ENCODE measurements at regions of chr9 and their contacts with region 1.

Region 1: GRCh38 chr9:137046098-137046787 is at the start of gene NPDC1:
- DNase-seq: peak; percentile 68 to 83 (median 71)
- H3K4me3 ChIP-seq: peak within 1 kb of the TSS; percentile 47
- H3K4me3 Mint-ChIP-seq: peak within 1 kb of the TSS; percentile 70 to 87 (median 86)
- H3K27ac ChIP-seq: peak within 1 kb of the TSS; percentile 24
- H3K27ac Mint-ChIP-seq: peak within 1 kb of the TSS in 4 of 8 donors; percentile 38 to 60 (median 44)
- H3K4me1 ChIP-seq: peaks cover 27% of the 10 kb centered on the region
- H3K4me1 Mint-ChIP-seq: peaks cover 6 to 26% (median 13%) of the 10 kb centered on the region in 3 donors
- H3K27me3 ChIP-seq: peaks cover 49% of the 10 kb centered on the region
- H3K27me3 Mint-ChIP-seq: peaks cover 28 to 35% of the 10 kb centered on the region in 2 donors
- total RNA-seq, gene NPDC1: 24.6 to 27.5 TPM

Region 2: DNA sequence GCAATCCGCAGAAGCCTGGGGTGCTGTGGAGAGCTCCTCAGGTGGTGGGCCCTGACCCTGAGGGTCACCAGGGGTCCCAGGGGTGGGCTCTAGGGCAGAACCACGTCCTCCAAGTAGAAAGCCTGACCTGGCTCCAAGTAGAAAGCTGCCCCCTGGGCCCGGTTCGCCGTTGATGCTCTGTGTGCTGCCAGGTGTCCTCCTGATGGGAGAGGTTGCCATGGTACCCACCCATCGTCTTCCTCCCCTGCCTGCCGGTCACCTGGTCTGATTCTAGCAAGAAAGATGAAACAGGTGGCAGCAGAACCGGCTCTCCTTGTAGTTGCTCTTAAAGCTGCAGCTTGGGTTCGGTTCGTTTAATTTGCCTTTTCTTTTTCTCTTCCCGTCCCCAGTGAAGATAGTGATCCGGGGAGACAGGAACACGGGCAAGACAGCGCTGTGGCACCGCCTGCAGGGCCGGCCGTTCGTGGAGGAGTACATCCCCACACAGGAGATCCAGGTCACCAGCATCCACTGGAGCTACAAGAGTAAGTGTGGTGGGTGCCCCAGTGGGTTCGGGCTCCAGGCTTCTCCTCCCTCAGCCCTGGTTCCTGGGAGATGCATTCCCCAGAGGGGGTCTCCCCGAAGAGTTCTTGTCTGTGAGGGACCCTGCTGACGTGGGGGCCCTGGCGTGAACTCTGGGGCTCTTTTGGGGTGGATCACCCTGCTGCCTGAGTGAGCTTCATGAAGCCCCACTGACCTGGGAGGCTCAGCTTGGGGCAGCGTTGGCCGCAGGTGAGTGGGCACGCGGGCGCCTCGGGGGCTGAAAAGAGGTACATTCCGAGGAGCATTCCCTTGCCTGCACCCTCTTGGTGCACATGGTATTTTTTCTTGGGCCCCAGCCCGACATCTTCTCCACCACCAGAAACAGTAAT is 222.9 kb before region 1 on chr9:
- CTCF ChIA-PET with region 1: no interaction called
- POLR2A ChIA-PET with region 1: no interaction called
- DNase-seq: no peak
- H3K4me3 ChIP-seq: no peak overlapping the region
- H3K4me3 Mint-ChIP-seq: no peak overlapping the region
- H3K27ac ChIP-seq: no peak overlapping the region
- H3K27ac Mint-ChIP-seq: no peak overlapping the region
- H3K4me1 ChIP-seq: no peaks in the 10 kb centered on the region
- H3K4me1 Mint-ChIP-seq: peaks cover 7 to 10% (median 9%) of the 10 kb centered on the region in 3 donors
- H3K27me3 ChIP-seq: no peaks in the 10 kb centered on the region
- H3K27me3 Mint-ChIP-seq: no peaks in the 10 kb centered on the region

Region 3: GRCh38 chr9:137002251-137003041 is 43.8 kb before region 1 on chr9:
- CTCF ChIA-PET with region 1: no interaction called
- POLR2A ChIA-PET with region 1: no interaction called
- DNase-seq: no peak
- H3K4me3 ChIP-seq: no peak overlapping the region
- H3K4me3 Mint-ChIP-seq: no peak overlapping the region
- H3K27ac ChIP-seq: no peak overlapping the region
- H3K27ac Mint-ChIP-seq: no peak overlapping the region
- H3K4me1 ChIP-seq: peaks cover 28% of the 10 kb centered on the region
- H3K4me1 Mint-ChIP-seq: peaks cover 33 to 52% (median 43%) of the 10 kb centered on the region in 3 donors
- H3K27me3 ChIP-seq: no peaks in the 10 kb centered on the region
- H3K27me3 Mint-ChIP-seq: no peaks in the 10 kb centered on the region

Region 4: GRCh38 chr9:137064027-137064879 is 18.0 kb after region 1 on chr9:
- CTCF ChIA-PET with region 1: interaction called, 87 read pairs
- POLR2A ChIA-PET with region 1: interaction called, 3 read pairs
- DNase-seq: peak in 3 of 5 donors; percentile 38 to 50 (median 49)
- H3K4me3 ChIP-seq: no peak overlapping the region
- H3K4me3 Mint-ChIP-seq: no peak overlapping the region
- H3K27ac ChIP-seq: no peak overlapping the region
- H3K27ac Mint-ChIP-seq: peak overlapping the region in 1 of 8 donors; percentile 37
- H3K4me1 ChIP-seq: peaks cover 2% of the 10 kb centered on the region
- H3K4me1 Mint-ChIP-seq: peaks cover 6 to 10% (median 7%) of the 10 kb centered on the region in 3 donors
- H3K27me3 ChIP-seq: no peaks in the 10 kb centered on the region
- H3K27me3 Mint-ChIP-seq: peaks cover 3 to 4% of the 10 kb centered on the region in 2 donors

Region 5: DNA sequence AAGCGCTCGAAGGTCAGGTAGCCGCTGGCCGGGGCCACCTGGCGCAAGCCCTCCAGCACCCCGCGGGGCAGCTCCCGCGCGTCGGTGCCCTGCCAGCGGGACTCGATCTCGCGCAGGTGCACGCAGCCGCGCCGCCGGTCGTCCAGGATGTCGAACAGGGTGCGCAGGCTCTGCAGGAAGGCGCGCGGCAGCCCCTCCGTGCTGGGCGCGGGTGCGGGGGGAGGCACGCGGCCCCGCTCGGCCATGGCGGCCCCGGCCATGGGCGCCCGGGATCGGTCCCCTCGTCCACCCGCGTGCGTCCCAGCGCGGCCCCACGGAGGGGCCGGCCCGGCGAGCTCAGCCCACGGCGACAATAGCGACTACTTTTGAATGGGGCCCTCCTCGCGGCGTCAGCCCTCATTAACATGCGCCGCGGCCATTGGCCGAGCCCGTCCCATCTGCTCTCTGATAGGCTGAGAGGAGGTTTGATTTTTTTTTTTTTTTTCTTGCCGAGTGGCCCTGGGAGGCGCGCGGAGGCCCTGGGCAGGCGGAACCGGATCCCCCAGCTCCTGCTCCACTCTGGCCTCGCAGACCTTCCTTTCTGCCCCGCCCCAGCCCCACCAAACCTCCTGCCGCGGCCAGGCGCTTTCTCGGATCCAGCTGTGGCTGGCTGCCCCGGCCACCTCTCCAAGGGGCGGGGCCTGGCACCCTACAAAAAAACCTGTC is 24.1 kb after region 1 on chr9 and contains the start of gene SAPCD2:
- CTCF ChIA-PET with region 1: interaction called, 87 read pairs
- POLR2A ChIA-PET with region 1: interaction called, 3 read pairs
- DNase-seq: peak; percentile 80 to 91 (median 85)
- H3K4me3 ChIP-seq: peak within 1 kb of the TSS; percentile 39
- H3K4me3 Mint-ChIP-seq: peak within 1 kb of the TSS; percentile 66 to 88 (median 77)
- H3K27ac ChIP-seq: peak within 1 kb of the TSS; percentile 65
- H3K27ac Mint-ChIP-seq: peak within 1 kb of the TSS in 6 of 8 donors; percentile 43 to 89 (median 75)
- H3K4me1 ChIP-seq: peaks cover 14% of the 10 kb centered on the region
- H3K4me1 Mint-ChIP-seq: peaks cover 6 to 19% (median 12%) of the 10 kb centered on the region in 3 donors
- H3K27me3 ChIP-seq: no peaks in the 10 kb centered on the region
- H3K27me3 Mint-ChIP-seq: peaks cover 3 to 4% of the 10 kb centered on the region in 2 donors
- total RNA-seq, gene SAPCD2: 11.5 to 12.7 TPM

Measured in CD8-positive, alpha-beta memory T cell (primary cell).